ENCODE measurements at regions of chrX and their contacts with region 1.

Region 1: DNA sequence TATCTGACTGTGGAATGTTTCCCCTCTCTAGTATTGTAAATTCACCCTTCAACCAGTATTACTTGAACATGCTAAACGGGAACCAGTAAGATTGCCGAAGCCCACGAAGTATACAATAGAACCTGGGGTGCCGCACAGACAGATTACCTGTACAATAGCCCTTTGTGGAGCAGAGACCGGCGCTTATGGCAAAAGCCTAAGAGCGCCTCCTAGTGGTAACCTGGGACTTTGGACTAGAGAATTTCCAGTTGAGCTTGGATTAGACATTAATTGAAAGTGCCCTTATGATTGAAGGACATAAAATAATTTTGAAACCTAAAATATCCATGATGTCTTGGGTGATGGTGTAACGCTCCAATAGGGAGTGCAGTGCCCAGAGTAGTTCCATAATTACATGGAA is 14.1 kb downstream of the ZNF157 start:
- DNase-seq: no peak
- ATAC-seq: no peak

Region 2: DNA sequence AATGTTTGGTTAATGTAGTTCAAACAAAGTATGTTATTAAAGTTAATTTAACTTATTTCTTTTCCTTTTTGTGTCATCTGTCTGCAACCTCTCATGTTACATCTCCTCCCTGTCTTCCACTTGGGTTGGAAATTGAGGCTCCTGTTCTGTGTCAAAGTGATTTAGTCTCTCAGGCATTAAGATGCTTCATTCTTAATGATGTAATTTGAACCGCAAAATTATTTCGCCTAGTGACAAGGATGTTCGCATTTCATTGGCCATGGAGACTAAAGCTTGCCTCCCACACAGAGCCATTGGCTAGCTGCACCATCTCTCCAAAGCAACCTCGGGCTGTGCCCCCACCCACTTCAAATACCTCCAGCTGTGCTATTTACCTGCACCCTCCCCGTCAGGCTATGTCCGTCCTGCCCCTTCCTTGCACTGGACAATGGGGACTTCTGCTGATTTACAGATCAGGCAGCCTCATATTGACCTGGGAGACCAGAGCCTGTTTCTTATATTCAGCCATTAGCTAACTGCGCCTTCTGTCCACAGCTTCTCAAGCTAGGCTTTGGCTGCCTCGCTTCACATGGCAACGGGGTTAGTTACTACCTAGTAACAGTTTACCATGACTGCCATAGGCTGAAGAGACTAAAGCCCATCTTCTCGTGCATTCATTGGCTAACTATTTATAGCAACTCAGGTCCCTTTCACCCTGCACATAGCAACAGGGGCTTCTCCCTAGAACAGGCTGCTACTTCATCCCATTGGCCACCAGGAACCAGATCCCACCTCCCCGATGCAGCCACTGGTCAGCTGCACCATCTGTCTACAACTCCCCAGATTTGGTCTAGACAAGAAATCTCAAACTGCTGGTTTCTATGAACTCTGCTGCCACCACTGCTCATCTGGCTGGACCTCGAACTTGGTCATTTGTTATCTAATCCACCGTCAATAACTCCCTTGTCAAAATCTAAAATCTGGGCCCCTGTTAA is 22.7 kb before region 1 on chrX:
- intact Hi-C with region 1: no loop called
- DNase-seq: peak; percentile 74
- ATAC-seq: peak; percentile 96

Region 3: GRCh38 chrX:47523297-47523696 is 138.8 kb after region 1 on chrX:
- intact Hi-C with region 1: loop called (anchors 5 kb)
- DNase-seq: peak; percentile 94
- ATAC-seq: peak; percentile 99

Measured in Right ventricle myocardium inferior (tissue), 1 donor.